GM12878 (cell line): ENCODE measurements at regions of chr7 and their contacts with region 1.

Region 1: GRCh38 chr7:106461993-106462859 is 177.4 kb upstream of the NAMPT start:
- DNase-seq: peak; percentile 39
- ATAC-seq: peak; percentile 83
- H3K4me3 ChIP-seq: no peak overlapping the region
- H3K27ac ChIP-seq: no peak overlapping the region
- H3K4me1 ChIP-seq: peaks cover 12% of the 10 kb centered on the region
- H3K27me3 ChIP-seq: no peaks in the 10 kb centered on the region
- CTCF ChIP-seq: peak; percentile 40 to 56 (median 47); a peak in 5 of 6 replicates
- EP300 ChIP-seq: no peak
- POLR2A ChIP-seq: no peak
- RAD21 ChIP-seq: peak; percentile 79

Region 2: GRCh38 chr7:106166655-106167342 is 295.4 kb before region 1 on chr7:
- CTCF ChIA-PET with region 1: interaction called, 530 read pairs
- POLR2A ChIA-PET with region 1: no interaction called
- RAD21 ChIA-PET with region 1: interaction called, 19 read pairs
- SMC1A ChIA-PET with region 1: interaction called, 390 read pairs
- in situ Hi-C with region 1: no loop called
- intact Hi-C with region 1: no loop called
- DNase-seq: no peak
- ATAC-seq: peak; percentile 77
- H3K4me3 ChIP-seq: no peak overlapping the region
- H3K27ac ChIP-seq: no peak overlapping the region
- H3K4me1 ChIP-seq: no peaks in the 10 kb centered on the region
- H3K27me3 ChIP-seq: no peaks in the 10 kb centered on the region
- CTCF ChIP-seq: peak; percentile 68 to 77 (median 72); a peak in 5 of 6 replicates
- EP300 ChIP-seq: no peak
- POLR2A ChIP-seq: no peak
- RAD21 ChIP-seq: peak; percentile 85

Region 3: DNA sequence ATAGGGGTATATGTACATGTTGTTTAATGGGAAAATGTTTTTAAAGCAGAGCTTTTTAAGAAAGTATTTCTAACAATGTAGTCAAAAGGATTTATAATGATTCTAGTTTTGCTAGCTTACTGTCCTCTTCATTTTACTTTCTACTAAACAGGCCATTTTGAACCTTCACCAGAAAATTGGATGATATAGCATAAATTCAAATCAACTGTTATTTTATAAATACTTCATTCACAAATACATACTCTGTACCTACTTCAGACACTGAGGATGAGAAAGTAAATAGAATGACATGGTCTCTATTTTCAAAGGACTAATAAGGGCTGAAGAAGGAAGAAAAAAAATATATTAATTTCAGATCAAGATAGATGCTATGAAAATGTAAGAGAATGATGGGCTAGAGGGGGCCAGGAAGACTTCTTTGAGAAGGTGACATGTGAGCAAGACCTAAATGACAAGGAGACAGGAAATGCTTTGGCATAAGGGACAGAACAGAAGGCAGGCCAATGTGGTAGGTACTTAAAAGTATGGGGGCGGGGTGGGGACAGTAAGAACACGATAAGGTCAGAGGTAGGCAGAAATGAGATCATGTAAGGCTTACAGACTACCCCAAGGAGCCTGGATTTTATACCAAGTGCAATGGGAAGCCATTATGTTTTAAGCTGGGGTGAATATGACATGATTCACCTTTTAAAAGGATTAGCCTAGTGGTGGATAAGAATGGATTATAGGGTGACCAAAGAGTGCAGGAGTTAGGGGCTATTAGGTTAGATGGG is 182.6 kb before region 1 on chr7:
- CTCF ChIA-PET with region 1: interaction called, 23 read pairs
- POLR2A ChIA-PET with region 1: interaction called, 3 read pairs
- RAD21 ChIA-PET with region 1: interaction called, 20 read pairs
- SMC1A ChIA-PET with region 1: interaction called, 12 read pairs
- in situ Hi-C with region 1: no loop called
- intact Hi-C with region 1: loop called (anchors 5 kb)
- DNase-seq: no peak
- ATAC-seq: peak; percentile 47
- H3K4me3 ChIP-seq: peak overlapping the region; percentile 16; the same call in 1 of the 2 replicates
- H3K27ac ChIP-seq: no peak overlapping the region
- H3K4me1 ChIP-seq: peaks cover 7% of the 10 kb centered on the region; the same call in 1 of the 2 replicates
- H3K27me3 ChIP-seq: no peaks in the 10 kb centered on the region
- CTCF ChIP-seq: no peak
- EP300 ChIP-seq: no peak
- POLR2A ChIP-seq: no peak
- RAD21 ChIP-seq: no peak

Region 4: GRCh38 chr7:106358103-106358663 is 104.0 kb before region 1 on chr7:
- CTCF ChIA-PET with region 1: interaction called, 7 read pairs
- POLR2A ChIA-PET with region 1: no interaction called
- RAD21 ChIA-PET with region 1: no interaction called
- SMC1A ChIA-PET with region 1: interaction called, 10 read pairs
- in situ Hi-C with region 1: no loop called
- intact Hi-C with region 1: no loop called
- DNase-seq: no peak
- ATAC-seq: peak; percentile 95
- H3K4me3 ChIP-seq: no peak overlapping the region
- H3K27ac ChIP-seq: peak overlapping the region; percentile 31; the same call in 1 of the 2 replicates
- H3K4me1 ChIP-seq: no peaks in the 10 kb centered on the region; the same call in 1 of the 2 replicates
- H3K27me3 ChIP-seq: no peaks in the 10 kb centered on the region
- CTCF ChIP-seq: no peak
- EP300 ChIP-seq: peak in 1 of 2 experiments; percentile 67; a peak in 1 of 4 replicates
- POLR2A ChIP-seq: no peak
- RAD21 ChIP-seq: no peak

Region 5: DNA sequence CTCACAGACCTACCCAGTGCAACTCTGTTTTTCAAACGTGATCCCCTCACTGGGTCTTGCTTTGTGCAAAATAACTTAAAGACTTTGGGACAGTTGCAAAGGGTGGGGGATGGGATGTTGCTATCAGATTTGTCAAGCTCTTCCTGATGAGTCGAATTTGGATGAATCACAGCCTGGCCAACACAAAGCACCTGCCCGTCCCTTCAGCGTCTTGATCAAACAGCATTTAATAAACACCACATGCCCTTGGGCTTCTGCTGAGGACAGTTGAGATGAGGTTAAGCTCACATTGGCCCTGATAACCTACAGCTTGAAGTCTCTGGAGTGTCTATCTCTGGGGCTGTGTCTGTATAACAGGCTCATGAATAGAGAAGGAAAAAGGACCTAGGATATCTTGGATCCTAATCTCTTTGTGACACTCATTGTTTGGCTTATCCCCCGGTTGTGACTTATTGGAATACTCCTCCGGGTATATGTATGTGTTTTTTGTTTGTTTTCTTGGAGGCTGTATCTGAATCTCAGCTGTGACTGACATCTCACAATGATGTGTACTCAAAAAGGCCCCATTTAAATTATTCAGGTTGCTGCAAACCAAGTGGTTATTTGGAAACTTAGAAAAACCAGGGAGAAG is 44.8 kb before region 1 on chr7:
- CTCF ChIA-PET with region 1: interaction called, 6 read pairs
- POLR2A ChIA-PET with region 1: no interaction called
- RAD21 ChIA-PET with region 1: interaction called, 5 read pairs
- SMC1A ChIA-PET with region 1: interaction called, 16 read pairs
- in situ Hi-C with region 1: no loop called
- intact Hi-C with region 1: no loop called
- DNase-seq: no peak
- ATAC-seq: no peak
- H3K4me3 ChIP-seq: no peak overlapping the region
- H3K27ac ChIP-seq: no peak overlapping the region
- H3K4me1 ChIP-seq: no peaks in the 10 kb centered on the region
- H3K27me3 ChIP-seq: no peaks in the 10 kb centered on the region
- CTCF ChIP-seq: no peak
- EP300 ChIP-seq: no peak
- POLR2A ChIP-seq: no peak
- RAD21 ChIP-seq: no peak

Region 6: DNA sequence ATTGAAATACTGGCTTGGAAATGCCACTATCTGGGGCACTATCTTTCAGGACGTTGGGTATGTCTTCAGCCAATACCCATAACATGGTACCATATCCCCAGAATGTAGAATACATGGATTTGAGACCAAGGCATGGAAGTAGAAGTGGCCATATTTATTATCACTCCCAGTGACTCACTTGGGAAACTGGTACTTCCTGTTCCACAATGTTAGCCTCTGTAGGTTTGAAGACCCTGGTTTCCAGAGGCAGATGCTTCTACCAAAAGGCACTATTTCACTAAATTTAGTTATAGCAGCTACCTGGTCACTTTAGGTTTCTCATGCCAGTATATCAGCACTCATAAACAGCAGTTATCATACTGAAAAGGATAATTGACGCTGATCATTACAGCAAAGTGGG is 14.5 kb after region 1 on chr7:
- CTCF ChIA-PET with region 1: interaction called, 10 read pairs
- POLR2A ChIA-PET with region 1: interaction called, 3 read pairs
- RAD21 ChIA-PET with region 1: interaction called, 5 read pairs
- SMC1A ChIA-PET with region 1: interaction called, 7 read pairs
- in situ Hi-C with region 1: no loop called
- intact Hi-C with region 1: no loop called
- DNase-seq: no peak
- ATAC-seq: no peak
- H3K4me3 ChIP-seq: no peak overlapping the region
- H3K27ac ChIP-seq: no peak overlapping the region
- H3K4me1 ChIP-seq: peaks cover 8% of the 10 kb centered on the region
- H3K27me3 ChIP-seq: no peaks in the 10 kb centered on the region
- CTCF ChIP-seq: no peak
- EP300 ChIP-seq: no peak
- POLR2A ChIP-seq: no peak
- RAD21 ChIP-seq: no peak

Region 7: GRCh38 chr7:106588422-106589198 is 126.4 kb after region 1 on chr7:
- CTCF ChIA-PET with region 1: no interaction called
- POLR2A ChIA-PET with region 1: no interaction called
- RAD21 ChIA-PET with region 1: no interaction called
- SMC1A ChIA-PET with region 1: no interaction called
- in situ Hi-C with region 1: no loop called
- intact Hi-C with region 1: no loop called
- DNase-seq: no peak
- ATAC-seq: no peak
- H3K4me3 ChIP-seq: no peak overlapping the region
- H3K27ac ChIP-seq: no peak overlapping the region
- H3K4me1 ChIP-seq: no peaks in the 10 kb centered on the region
- H3K27me3 ChIP-seq: no peaks in the 10 kb centered on the region
- CTCF ChIP-seq: no peak
- EP300 ChIP-seq: no peak
- POLR2A ChIP-seq: no peak
- RAD21 ChIP-seq: no peak

Region 8: DNA sequence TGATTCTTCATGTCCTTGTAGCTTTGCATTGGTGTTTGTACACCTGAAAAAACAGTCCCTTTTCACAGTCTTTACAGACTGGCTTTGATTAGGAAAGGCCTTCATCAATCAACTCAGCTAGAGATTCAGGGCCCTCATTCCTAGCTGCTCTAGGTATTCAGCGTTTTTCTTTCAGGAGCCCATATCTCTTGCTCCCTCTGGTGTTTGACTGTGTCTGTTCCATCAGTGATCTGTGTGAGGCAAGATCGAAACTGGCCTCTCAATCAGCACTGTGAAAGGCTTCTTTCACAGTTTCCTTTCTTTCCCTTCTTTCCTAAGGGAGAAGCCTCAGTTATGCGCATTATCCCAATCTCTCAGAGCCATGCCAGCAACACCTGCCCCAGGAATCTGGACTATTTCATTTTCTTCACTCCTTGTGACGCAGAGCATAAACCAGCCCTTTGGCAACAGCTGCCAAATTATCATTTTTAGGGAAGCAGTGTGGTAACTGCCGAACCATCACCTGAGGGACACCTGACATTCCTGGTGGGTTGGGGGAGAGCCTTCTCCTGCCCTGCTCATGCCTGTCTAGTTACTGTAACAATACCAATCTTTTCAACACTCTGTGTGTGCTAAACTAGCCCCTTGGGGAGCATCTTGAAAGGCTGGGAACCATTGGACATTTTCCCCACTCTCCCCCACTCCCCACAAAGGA is 274.4 kb after region 1 on chr7:
- CTCF ChIA-PET with region 1: interaction called, 11 read pairs
- POLR2A ChIA-PET with region 1: no interaction called
- RAD21 ChIA-PET with region 1: interaction called, 9 read pairs
- SMC1A ChIA-PET with region 1: no interaction called
- in situ Hi-C with region 1: no loop called
- intact Hi-C with region 1: no loop called
- DNase-seq: peak; percentile 48
- ATAC-seq: peak; percentile 98
- H3K4me3 ChIP-seq: no peak overlapping the region
- H3K27ac ChIP-seq: no peak overlapping the region
- H3K4me1 ChIP-seq: peaks cover 15% of the 10 kb centered on the region
- H3K27me3 ChIP-seq: no peaks in the 10 kb centered on the region
- CTCF ChIP-seq: peak; percentile 75 to 86 (median 80)
- EP300 ChIP-seq: no peak
- POLR2A ChIP-seq: no peak
- RAD21 ChIP-seq: peak; percentile 97